Vagina (tissue), 2 donors: ENCODE measurements at regions of chr1 and their contacts with region 1.

Region 1: DNA sequence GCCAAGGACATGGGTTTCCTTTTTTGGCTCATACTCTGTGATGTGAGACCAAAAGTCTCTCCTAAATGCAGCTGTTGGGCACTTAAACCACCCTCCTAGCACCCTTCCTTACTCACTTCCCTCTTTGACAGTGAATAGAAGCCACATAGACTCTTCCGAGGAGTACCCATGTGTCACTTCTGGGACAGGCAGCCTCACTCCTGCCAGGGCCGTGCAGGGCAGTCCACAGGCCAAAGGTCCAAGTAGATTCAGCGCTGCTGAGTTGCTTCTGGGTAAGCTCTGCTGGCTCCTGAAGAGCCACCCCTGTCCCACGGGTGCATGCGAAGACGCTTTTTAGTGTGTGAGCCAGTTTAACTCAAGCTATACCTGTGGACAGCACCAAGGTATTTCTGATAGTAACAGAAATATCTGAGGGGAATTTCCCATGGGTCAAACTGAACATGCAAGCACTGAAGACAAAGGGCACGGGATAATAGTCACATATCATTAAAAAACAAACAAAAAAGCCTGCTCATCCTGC is 36.8 kb upstream of the BMP8B start:
- DNase-seq: no peak
- H3K4me3 ChIP-seq: no peak overlapping the region
- H3K27ac ChIP-seq: no peak overlapping the region
- H3K4me1 ChIP-seq: no peaks in the 10 kb centered on the region
- H3K27me3 ChIP-seq: no peaks in the 10 kb centered on the region
- CTCF ChIP-seq: no peak
- POLR2A ChIP-seq: no peak

Region 2: GRCh38 chr1:39872698-39873097 is 47.2 kb after region 1 on chr1:
- intact Hi-C with region 1: loop called (anchors 5 kb)
- DNase-seq: no peak
- H3K4me3 ChIP-seq: no peak overlapping the region
- H3K27ac ChIP-seq: no peak overlapping the region
- H3K4me1 ChIP-seq: peaks cover 23% of the 10 kb centered on the region
- H3K27me3 ChIP-seq: no peaks in the 10 kb centered on the region
- CTCF ChIP-seq: no peak
- POLR2A ChIP-seq: no peak